H1 (cell line): ENCODE measurements at regions of chr17 and their contacts with region 1.

Region 1: GRCh38 chr17:73347351-73347750 is 35.5 kb upstream of the CDC42EP4 start:
- DNase-seq: no peak
- H3K4me3 ChIP-seq: no peak overlapping the region
- H3K27ac ChIP-seq: no peak overlapping the region
- H3K4me1 ChIP-seq: peaks cover 6 to 41% (median 28%) of the 10 kb centered on the region in 4 experiments
- H3K27me3 ChIP-seq: no peaks in the 10 kb centered on the region; a peak in 1 of 7 replicates
- CTCF ChIP-seq: no peak
- EP300 ChIP-seq: no peak
- POLR2A ChIP-seq: no peak
- RAD21 ChIP-seq: no peak

Region 2: GRCh38 chr17:73359987-73360410 is 12.6 kb after region 1 on chr17:
- CTCF ChIA-PET with region 1: interaction called, 33 read pairs
- POLR2A ChIA-PET with region 1: interaction called, 10 read pairs
- DNase-seq: peak; percentile 59 to 81
- H3K4me3 ChIP-seq: peak overlapping the region in 1 of 4 experiments; percentile 34; a peak in 3 of 8 replicates
- H3K27ac ChIP-seq: no peak overlapping the region
- H3K4me1 ChIP-seq: peaks cover 4 to 33% (median 26%) of the 10 kb centered on the region in 4 experiments
- H3K27me3 ChIP-seq: no peaks in the 10 kb centered on the region
- CTCF ChIP-seq: peak; percentile 33 to 42 (median 34)
- EP300 ChIP-seq: no peak
- POLR2A ChIP-seq: no peak
- RAD21 ChIP-seq: peak; percentile 23 to 58; a peak in 3 of 4 replicates

Region 3: GRCh38 chr17:73365906-73366623 is 18.7 kb after region 1 on chr17:
- CTCF ChIA-PET with region 1: interaction called, 33 read pairs
- POLR2A ChIA-PET with region 1: interaction called, 5 read pairs
- DNase-seq: no peak
- H3K4me3 ChIP-seq: no peak overlapping the region
- H3K27ac ChIP-seq: no peak overlapping the region
- H3K4me1 ChIP-seq: peaks cover 0 to 34% (median 20%) of the 10 kb centered on the region in 4 experiments; a peak in 6 of 7 replicates
- H3K27me3 ChIP-seq: no peaks in the 10 kb centered on the region
- CTCF ChIP-seq: no peak
- EP300 ChIP-seq: no peak
- POLR2A ChIP-seq: no peak
- RAD21 ChIP-seq: no peak